ENCODE measurements at regions of chr1 and their contacts with region 1.

Region 1: GRCh38 chr1:60541831-60542532 is 468.4 kb upstream of the C1orf87 start:
- DNase-seq: no peak
- ATAC-seq: no peak
- H3K4me3 ChIP-seq: no peak overlapping the region
- H3K27ac ChIP-seq: no peak overlapping the region
- H3K4me1 ChIP-seq: peaks cover 0 to 1% of the 10 kb centered on the region in 2 donors
- H3K27me3 ChIP-seq: no peaks in the 10 kb centered on the region

Region 2: GRCh38 chr1:60503251-60503925 is 38.6 kb before region 1 on chr1:
- intact Hi-C with region 1: loop called in 1 of 2 experiments (anchors 5 kb)
- DNase-seq: no peak
- ATAC-seq: no peak
- H3K4me3 ChIP-seq: no peak overlapping the region
- H3K27ac ChIP-seq: no peak overlapping the region
- H3K4me1 ChIP-seq: peaks cover 2 to 3% of the 10 kb centered on the region in 2 donors
- H3K27me3 ChIP-seq: no peaks in the 10 kb centered on the region

Region 3: GRCh38 chr1:60596791-60597747 is 55.1 kb after region 1 on chr1:
- intact Hi-C with region 1: no loop called
- DNase-seq: no peak
- ATAC-seq: peak; percentile 46
- H3K4me3 ChIP-seq: no peak overlapping the region
- H3K27ac ChIP-seq: no peak overlapping the region
- H3K4me1 ChIP-seq: peaks cover 5 to 17% of the 10 kb centered on the region in 2 donors
- H3K27me3 ChIP-seq: no peaks in the 10 kb centered on the region